Transverse colon (tissue), 4 donors: ENCODE measurements at regions of chr5 and their contacts with region 1.

Region 1: GRCh38 chr5:134289509-134290113 is 63.7 kb upstream of the PPP2CA start:
- DNase-seq: peak; percentile 51
- H3K4me3 ChIP-seq: no peak overlapping the region
- H3K27ac ChIP-seq: no peak overlapping the region
- H3K4me1 ChIP-seq: no peaks in the 10 kb centered on the region
- H3K27me3 ChIP-seq: no peaks in the 10 kb centered on the region
- CTCF ChIP-seq: peak; percentile 66 to 83 (median 68)
- EP300 ChIP-seq: no peak
- POLR2A ChIP-seq: no peak

Region 2: DNA sequence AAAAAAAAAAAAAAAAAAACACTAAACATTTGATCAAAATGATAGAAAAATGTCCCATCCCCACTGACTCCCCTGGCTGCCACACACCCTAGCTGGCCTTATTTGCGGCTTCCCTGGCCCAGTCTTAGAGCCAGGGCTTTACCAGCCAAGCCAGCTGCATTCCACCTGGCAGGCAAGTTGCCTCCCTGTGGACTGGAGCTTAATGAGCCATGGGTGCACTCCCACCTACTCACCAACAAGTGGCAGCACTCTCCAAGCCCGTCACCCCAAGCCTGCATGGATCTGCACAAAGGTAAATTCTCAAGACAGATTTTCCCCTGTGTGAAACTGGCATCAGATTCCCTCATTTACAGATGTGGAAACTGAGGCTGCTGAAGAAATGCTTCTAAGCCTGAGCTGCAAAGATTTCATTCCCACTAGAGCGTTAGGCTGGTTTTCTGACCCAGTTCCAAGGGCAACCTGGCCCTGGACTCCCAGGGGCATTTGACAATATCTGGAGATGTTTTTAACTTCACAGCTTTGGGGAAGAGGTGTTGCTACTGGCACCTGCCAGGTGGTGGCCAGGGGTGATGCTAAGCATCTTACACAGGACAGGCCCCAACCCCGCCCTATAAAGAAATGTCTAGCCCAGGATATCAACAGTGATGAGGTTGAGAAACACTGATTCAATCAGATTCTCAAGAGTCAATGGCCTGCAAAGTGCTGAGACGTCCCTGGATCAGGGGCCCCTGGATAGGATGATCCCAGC is 262.9 kb before region 1 on chr5:
- in situ Hi-C with region 1: loop called in 2 of 4 experiments (anchors 25 kb)
- intact Hi-C with region 1: no loop called
- DNase-seq: peak; percentile 75
- H3K4me3 ChIP-seq: no peak overlapping the region
- H3K27ac ChIP-seq: no peak overlapping the region
- H3K4me1 ChIP-seq: peaks cover 0 to 21% (median 6%) of the 10 kb centered on the region in 4 donors
- H3K27me3 ChIP-seq: no peaks in the 10 kb centered on the region
- CTCF ChIP-seq: peak; percentile 28 to 73 (median 52)
- EP300 ChIP-seq: no peak
- POLR2A ChIP-seq: no peak

Region 3: GRCh38 chr5:134161513-134162395 is 127.9 kb before region 1 on chr5:
- in situ Hi-C with region 1: no loop called
- intact Hi-C with region 1: no loop called
- DNase-seq: no peak
- H3K4me3 ChIP-seq: no peak overlapping the region
- H3K27ac ChIP-seq: no peak overlapping the region
- H3K4me1 ChIP-seq: peaks cover 0 to 3% (median 0%) of the 10 kb centered on the region in 4 donors
- H3K27me3 ChIP-seq: no peaks in the 10 kb centered on the region
- CTCF ChIP-seq: no peak
- EP300 ChIP-seq: no peak
- POLR2A ChIP-seq: no peak

Region 4: DNA sequence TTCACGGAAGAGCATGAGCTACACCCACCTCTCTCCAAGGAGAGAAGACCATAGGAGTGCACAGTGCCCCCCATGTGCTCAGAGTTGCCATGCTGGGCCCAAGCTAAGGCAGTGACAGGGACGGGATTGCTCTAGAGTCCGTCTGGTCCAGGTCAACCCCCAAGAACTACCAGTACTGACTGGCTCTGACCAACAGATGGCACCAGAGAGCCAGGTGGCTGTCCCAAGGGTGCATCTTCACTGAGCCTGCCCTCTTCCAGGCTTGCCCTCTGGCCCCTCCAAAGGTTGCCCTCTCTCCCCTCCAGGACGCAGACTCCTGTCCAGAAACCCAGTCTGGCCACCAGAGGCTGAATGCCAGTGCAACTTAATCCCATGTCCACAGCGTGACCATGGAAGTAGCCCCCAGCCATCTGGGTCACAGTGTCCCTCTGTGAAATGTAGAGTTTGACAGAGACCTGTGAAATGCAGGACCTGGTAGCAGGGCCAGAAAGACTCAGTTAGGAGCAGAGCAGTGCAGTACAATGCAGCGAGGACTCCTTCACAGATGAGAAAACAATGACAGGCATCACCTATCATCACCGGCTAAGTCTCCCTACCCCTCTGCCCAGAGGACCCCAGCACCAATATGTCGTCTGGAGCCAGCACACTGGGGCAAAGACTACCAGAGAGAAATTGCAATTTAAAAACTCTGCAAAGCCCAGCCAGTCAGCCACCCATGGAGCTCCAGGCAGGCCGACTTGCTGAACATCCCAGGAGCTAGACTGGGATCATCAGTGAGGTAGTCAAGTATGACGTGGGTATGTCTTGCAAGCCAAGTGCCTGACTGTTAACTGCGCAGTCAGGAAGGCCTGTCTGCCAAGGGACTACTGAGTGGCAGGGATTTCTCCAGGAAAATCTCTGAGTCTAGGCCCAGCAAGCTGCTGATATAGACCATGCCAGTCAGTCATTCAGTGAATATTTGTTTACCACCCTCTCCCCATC is 105.2 kb before region 1 on chr5:
- in situ Hi-C with region 1: loop called (anchors 5 to 10 kb)
- intact Hi-C with region 1: loop called (anchors 5 kb)
- DNase-seq: peak; percentile 79
- H3K4me3 ChIP-seq: no peak overlapping the region
- H3K27ac ChIP-seq: no peak overlapping the region
- H3K4me1 ChIP-seq: no peaks in the 10 kb centered on the region
- H3K27me3 ChIP-seq: no peaks in the 10 kb centered on the region
- CTCF ChIP-seq: peak; percentile 87 to 92 (median 90)
- EP300 ChIP-seq: no peak
- POLR2A ChIP-seq: no peak